ENCODE measurements at regions of chr4 and their contacts with region 1.

Region 1: GRCh38 chr4:180932370-180933001 is 1310.7 kb upstream of the TENM3 start:
- DNase-seq: no peak

Region 2: DNA sequence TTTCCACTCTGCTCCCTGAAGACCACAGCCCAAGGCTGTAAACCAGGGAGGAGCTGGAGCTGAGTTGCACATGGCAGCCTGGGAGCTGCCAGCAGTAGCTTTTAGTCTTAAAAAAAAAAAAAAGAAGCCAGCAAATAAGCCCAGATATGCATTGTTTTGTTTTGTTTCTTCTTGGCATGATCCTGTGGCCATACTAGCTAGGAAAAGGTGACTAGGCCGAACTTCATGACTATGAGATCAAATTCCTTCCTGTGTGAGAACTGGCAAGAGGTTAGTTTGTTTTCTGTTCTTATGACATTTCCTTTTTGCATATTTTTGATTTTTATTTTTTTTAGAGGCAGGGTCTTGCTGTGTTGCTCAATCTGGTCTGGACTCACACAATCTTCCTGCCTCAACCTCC is 1661.4 kb after region 1 on chr4:
- intact Hi-C with region 1: loop called in 1 of 2 experiments (anchors 10 kb)
- DNase-seq: no peak